T-cell (primary cell): ENCODE measurements at regions of chr1 and their contacts with region 1.

Region 1: GRCh38 chr1:40338745-40339424 is 21.8 kb upstream of the COL9A2 start:
- DNase-seq: peak; percentile 78 to 95 (median 87)
- ATAC-seq: peak; percentile 85 to 93 (median 91)
- H3K4me3 ChIP-seq: no peak overlapping the region
- H3K4me3 Mint-ChIP-seq: peak overlapping the region in 2 of 3 donors; percentile 4 to 25
- H3K27ac ChIP-seq: no peak overlapping the region
- H3K27ac Mint-ChIP-seq: peak overlapping the region in 1 of 2 donors; percentile 5
- H3K4me1 ChIP-seq: peaks cover 0 to 22% of the 10 kb centered on the region in 2 experiments
- H3K4me1 Mint-ChIP-seq: peaks cover 39 to 51% (median 41%) of the 10 kb centered on the region in 3 donors
- H3K27me3 ChIP-seq: no peaks in the 10 kb centered on the region
- H3K27me3 Mint-ChIP-seq: no peaks in the 10 kb centered on the region

Region 2: DNA sequence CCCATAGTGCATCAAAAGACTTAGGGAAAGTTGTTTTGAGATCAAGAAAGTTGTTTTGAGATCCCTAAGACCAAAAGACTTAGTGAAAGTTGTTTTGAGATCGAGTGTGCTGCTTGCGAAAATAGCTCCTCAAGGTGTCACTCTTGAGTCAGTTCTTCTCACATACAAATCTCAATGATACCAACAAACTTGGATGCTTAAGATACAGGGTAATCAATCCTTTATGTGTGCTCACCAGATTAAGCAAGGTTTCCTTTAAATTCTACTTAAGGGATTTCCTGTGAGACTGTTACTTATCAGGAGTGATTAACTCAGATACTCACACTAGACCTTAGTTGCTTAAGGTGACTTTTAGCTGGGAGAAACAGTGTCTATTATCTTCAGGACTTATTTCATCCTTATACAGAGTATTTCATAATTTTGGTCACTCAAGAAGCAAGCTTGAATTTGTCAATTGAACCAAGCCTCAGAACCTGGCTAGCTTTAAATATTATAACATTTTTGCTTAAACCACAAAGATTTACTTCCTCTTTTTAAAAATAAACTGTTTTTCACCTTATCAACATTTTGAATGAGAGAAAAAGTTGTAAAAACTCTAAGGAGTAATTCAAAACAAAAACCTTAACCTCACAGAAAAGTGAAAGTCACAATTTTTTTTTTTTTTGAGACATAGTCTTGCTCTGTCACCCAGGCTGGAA is 185.7 kb before region 1 on chr1:
- CTCF ChIA-PET with region 1: interaction called, 12 to 75 read pairs
- POLR2A ChIA-PET with region 1: no interaction called
- DNase-seq: peak in 20 of 35 experiments; percentile 9 to 83 (median 24)
- ATAC-seq: peak; percentile 57 to 81 (median 70)
- H3K4me3 ChIP-seq: no peak overlapping the region
- H3K4me3 Mint-ChIP-seq: peak overlapping the region in 2 of 3 donors; percentile 14 to 23
- H3K27ac ChIP-seq: no peak overlapping the region
- H3K27ac Mint-ChIP-seq: peak overlapping the region; percentile 40 to 82
- H3K4me1 ChIP-seq: no peaks in the 10 kb centered on the region
- H3K4me1 Mint-ChIP-seq: peaks cover 5 to 10% (median 6%) of the 10 kb centered on the region in 3 donors
- H3K27me3 ChIP-seq: no peaks in the 10 kb centered on the region
- H3K27me3 Mint-ChIP-seq: peaks cover 4% of the 10 kb centered on the region in 2 donors

Region 3: GRCh38 chr1:40224040-40224439 is 114.8 kb before region 1 on chr1:
- CTCF ChIA-PET with region 1: interaction called, 9 to 10 read pairs
- POLR2A ChIA-PET with region 1: interaction called in 1 of 2 experiments, 21 read pairs
- DNase-seq: no peak
- ATAC-seq: no peak
- H3K4me3 ChIP-seq: no peak overlapping the region
- H3K4me3 Mint-ChIP-seq: no peak overlapping the region
- H3K27ac ChIP-seq: no peak overlapping the region
- H3K27ac Mint-ChIP-seq: no peak overlapping the region
- H3K4me1 ChIP-seq: no peaks in the 10 kb centered on the region
- H3K4me1 Mint-ChIP-seq: peaks cover 5 to 10% (median 8%) of the 10 kb centered on the region in 3 donors
- H3K27me3 ChIP-seq: no peaks in the 10 kb centered on the region
- H3K27me3 Mint-ChIP-seq: no peaks in the 10 kb centered on the region

Region 4: DNA sequence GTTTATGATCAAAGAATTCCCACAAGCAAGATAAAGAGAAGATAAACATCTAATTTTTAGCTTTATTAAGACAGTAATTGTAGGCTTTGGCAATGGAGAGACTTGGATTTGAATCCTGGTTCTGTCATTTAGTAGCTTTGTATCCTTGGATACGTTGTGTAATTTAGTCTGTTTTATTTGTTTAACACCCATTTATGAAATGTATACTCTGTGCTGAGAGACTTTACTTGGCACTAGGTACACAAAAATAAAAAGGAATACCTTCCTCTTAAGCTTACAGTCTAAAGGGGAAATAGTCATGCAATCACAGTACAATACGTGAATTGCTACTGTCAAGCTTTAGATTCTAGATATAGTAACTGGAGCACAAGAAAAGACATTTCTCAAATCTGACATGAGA is 57.0 kb before region 1 on chr1:
- CTCF ChIA-PET with region 1: no interaction called
- POLR2A ChIA-PET with region 1: no interaction called
- DNase-seq: no peak
- ATAC-seq: no peak
- H3K4me3 ChIP-seq: no peak overlapping the region
- H3K4me3 Mint-ChIP-seq: no peak overlapping the region
- H3K27ac ChIP-seq: no peak overlapping the region
- H3K27ac Mint-ChIP-seq: no peak overlapping the region
- H3K4me1 ChIP-seq: no peaks in the 10 kb centered on the region
- H3K4me1 Mint-ChIP-seq: no peaks in the 10 kb centered on the region
- H3K27me3 ChIP-seq: no peaks in the 10 kb centered on the region
- H3K27me3 Mint-ChIP-seq: no peaks in the 10 kb centered on the region

Region 5: GRCh38 chr1:40352126-40352525 is 13.2 kb after region 1 on chr1:
- CTCF ChIA-PET with region 1: interaction called, 3 to 15 read pairs
- POLR2A ChIA-PET with region 1: interaction called in 1 of 2 experiments, 8 read pairs
- DNase-seq: no peak
- ATAC-seq: no peak
- H3K4me3 ChIP-seq: no peak overlapping the region
- H3K4me3 Mint-ChIP-seq: no peak overlapping the region
- H3K27ac ChIP-seq: no peak overlapping the region
- H3K27ac Mint-ChIP-seq: no peak overlapping the region
- H3K4me1 ChIP-seq: no peaks in the 10 kb centered on the region
- H3K4me1 Mint-ChIP-seq: peaks cover 0 to 1% (median 0%) of the 10 kb centered on the region in 3 donors
- H3K27me3 ChIP-seq: no peaks in the 10 kb centered on the region
- H3K27me3 Mint-ChIP-seq: no peaks in the 10 kb centered on the region

Region 6: DNA sequence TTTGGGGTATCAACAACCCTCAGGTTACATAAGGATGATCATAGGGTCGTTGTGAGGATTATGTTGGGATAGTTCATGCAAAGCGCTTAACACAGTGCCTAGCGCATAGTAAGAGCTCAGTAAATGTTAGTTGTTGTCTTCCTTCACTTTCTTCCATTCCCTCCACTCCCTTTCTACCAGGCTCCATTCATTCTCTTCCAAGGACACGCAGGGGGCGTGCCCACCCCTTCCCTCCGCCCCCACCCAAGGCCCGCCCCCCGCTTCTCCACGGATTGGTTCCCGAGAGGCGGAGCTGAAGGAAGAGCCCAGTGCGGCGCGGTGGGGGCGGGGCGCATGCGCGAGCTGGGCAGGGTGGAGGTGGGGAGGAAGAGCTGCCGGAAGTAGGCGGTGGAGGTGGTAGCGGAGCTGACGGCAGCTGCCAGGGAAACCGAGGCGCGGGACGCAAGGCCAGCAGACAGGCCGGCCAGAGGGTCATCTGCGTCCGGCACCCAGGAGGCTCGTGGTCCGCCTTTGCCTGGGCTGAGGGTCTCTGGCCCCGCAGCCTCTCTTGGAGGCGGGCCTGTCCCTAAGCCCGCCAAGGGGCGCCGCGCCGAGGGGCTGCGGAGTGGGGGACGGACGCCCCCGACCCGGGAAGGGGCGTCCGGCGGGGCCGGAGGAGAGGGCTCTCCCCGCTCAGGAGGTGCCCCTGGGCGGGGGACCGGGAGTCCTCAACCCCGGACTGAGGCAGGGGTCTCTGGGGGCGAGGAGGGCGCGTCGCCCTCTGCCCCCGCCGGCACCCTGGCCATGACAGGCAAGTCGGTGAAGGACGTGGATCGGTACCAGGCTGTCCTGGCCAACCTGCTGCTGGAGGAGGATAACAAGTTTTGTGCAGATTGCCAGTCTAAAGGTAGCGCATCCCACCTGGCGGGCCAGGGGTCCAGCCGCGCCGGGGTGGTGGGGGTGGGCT is 34.7 kb after region 1 on chr1 and contains the start of gene SMAP2:
- CTCF ChIA-PET with region 1: interaction called in 1 of 2 experiments, 10 read pairs
- POLR2A ChIA-PET with region 1: no interaction called
- DNase-seq: peak; percentile 87 to 98 (median 95)
- ATAC-seq: peak; percentile 86 to 91 (median 88)
- H3K4me3 ChIP-seq: peak within 1 kb of the TSS; percentile 99
- H3K4me3 Mint-ChIP-seq: peak within 1 kb of the TSS; percentile 89 to 100 (median 98)
- H3K27ac ChIP-seq: peak within 1 kb of the TSS; percentile 99
- H3K27ac Mint-ChIP-seq: peak within 1 kb of the TSS; percentile 95 to 98
- H3K4me1 ChIP-seq: peaks cover 26 to 32% of the 10 kb centered on the region in 2 experiments
- H3K4me1 Mint-ChIP-seq: peaks cover 59 to 61% (median 59%) of the 10 kb centered on the region in 3 donors
- H3K27me3 ChIP-seq: no peaks in the 10 kb centered on the region
- H3K27me3 Mint-ChIP-seq: no peaks in the 10 kb centered on the region
- total RNA-seq, gene SMAP2: 120 to 254 (median 123) TPM

Region 7: DNA sequence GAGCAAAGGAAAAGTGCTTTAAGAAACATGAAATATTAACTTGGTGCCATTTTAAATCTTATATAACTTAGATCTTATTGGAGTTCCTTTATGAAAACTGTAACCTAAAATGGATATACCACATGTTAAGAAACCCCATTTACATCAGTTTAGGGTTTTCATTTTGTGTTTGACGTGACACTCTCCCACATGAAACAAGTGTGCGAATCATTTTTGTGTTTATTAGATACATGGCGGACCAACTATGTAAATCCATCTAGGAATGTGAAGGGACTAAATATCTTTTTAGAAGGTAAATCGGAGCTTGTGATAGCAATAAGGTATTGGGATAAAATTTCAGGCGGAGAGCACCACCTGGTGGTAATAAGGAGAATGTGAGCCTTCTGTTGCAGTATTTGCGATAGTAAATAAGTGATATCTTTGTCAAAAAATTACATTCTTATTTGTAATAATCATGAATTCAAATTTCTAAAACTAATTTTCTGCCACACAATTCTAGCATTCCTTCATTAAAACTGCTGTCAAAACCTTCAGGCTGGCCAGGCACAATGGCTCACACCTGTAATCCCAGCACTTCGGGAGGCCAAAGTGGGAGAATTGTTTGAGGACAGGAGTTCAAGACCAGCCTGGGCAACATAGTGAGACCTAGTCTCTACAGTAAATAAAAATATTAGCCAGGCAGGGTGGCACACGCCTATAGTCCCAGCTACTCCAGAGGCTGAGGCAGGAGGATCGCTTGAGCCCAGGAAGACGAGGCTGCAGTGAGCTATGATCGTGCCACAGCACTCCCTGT is 66.0 kb after region 1 on chr1:
- CTCF ChIA-PET with region 1: interaction called in 1 of 2 experiments, 33 read pairs
- POLR2A ChIA-PET with region 1: no interaction called
- DNase-seq: peak in 21 of 35 experiments; percentile 18 to 87 (median 48)
- ATAC-seq: peak; percentile 62 to 82 (median 70)
- H3K4me3 ChIP-seq: no peak overlapping the region
- H3K4me3 Mint-ChIP-seq: peak overlapping the region; percentile 44 to 57 (median 49)
- H3K27ac ChIP-seq: peak overlapping the region; percentile 87
- H3K27ac Mint-ChIP-seq: peak overlapping the region; percentile 75 to 88
- H3K4me1 ChIP-seq: peaks cover 30 to 44% of the 10 kb centered on the region in 2 experiments
- H3K4me1 Mint-ChIP-seq: peaks cover 76 to 82% (median 79%) of the 10 kb centered on the region in 3 donors
- H3K27me3 ChIP-seq: no peaks in the 10 kb centered on the region
- H3K27me3 Mint-ChIP-seq: no peaks in the 10 kb centered on the region